Posterior vena cava (tissue), 2 donors: ENCODE measurements at regions of chr7 and their contacts with region 1.

Region 1: GRCh38 chr7:41731492-41732435 is 28.9 kb upstream of the INHBA start:
- DNase-seq: no peak

Region 2: GRCh38 chr7:41771762-41772161 is 40.0 kb after region 1 on chr7:
- intact Hi-C with region 1: loop called in 1 of 2 experiments (anchors 2 kb)
- DNase-seq: no peak